Activated naive CD4-positive, alpha-beta T cell treated with anti-CD3 and anti-CD28 coated beads for 36 hours (primary cell): ENCODE measurements at regions of chr22 and their contacts with region 1.

Region 1: DNA sequence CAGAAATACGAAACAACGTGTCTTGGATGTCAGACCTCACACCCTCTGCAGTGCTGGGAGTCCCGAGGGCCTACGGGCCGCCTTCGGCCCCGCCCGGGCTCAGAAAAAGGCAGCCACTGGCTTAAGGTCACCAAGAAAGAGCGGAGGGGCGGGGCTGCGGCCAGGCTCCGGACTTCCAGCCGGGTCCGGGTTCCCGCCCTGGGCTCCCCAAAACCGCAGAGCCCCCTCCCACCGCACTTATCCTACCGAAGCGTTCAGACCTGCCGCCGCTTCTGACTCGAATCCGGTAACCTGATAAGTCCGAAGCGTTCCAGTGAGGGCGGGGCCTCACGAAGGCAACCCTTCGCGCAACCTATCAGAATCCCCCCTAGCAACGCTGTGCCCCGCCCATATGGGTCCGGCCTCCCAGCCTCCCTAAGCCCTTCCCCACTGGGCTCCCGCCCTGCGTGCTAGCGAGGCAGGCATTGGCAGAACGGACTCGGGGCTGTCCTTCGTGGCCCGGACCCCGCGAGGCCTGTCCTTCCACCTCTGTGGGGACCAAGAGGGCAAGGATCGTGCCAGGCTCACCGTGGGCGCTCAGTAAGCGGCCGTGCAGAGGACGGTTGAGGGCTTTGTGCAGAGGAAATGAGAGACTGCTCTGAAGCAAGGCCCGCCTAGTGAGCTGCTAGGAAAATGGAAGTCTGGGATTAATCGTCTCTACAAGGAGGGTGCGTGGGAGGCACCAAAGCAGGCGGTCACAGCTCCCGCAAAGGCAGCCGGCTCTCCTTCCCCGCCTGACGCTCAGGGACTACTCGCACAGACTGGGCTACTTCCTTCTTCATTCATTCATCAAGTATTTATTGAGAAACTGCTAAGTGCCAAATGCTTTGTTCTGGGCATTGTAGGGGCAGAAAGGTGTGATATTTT is at the start of gene NAGA:
- DNase-seq: peak; percentile 96
- H3K4me3 Mint-ChIP-seq: peak within 1 kb of the TSS; percentile 87
- H3K27ac Mint-ChIP-seq: peak within 1 kb of the TSS; percentile 88
- H3K4me1 Mint-ChIP-seq: peaks cover 34% of the 10 kb centered on the region
- H3K27me3 Mint-ChIP-seq: no peaks in the 10 kb centered on the region
- total RNA-seq, gene NAGA: 14.6 to 15.9 TPM

Region 2: GRCh38 chr22:41780746-41781505 is 289.8 kb before region 1 on chr22:
- CTCF ChIA-PET with region 1: no interaction called
- intact Hi-C with region 1: loop called (anchors 5 kb)
- DNase-seq: peak; percentile 98
- H3K4me3 Mint-ChIP-seq: peak overlapping the region; percentile 86
- H3K27ac Mint-ChIP-seq: peak overlapping the region; percentile 95
- H3K4me1 Mint-ChIP-seq: peaks cover 49% of the 10 kb centered on the region
- H3K27me3 Mint-ChIP-seq: no peaks in the 10 kb centered on the region

Region 3: GRCh38 chr22:41798736-41799135 is 272.0 kb before region 1 on chr22:
- CTCF ChIA-PET with region 1: no interaction called
- intact Hi-C with region 1: no loop called
- DNase-seq: no peak
- H3K4me3 Mint-ChIP-seq: peak overlapping the region; percentile 84
- H3K27ac Mint-ChIP-seq: peak overlapping the region; percentile 95
- H3K4me1 Mint-ChIP-seq: peaks cover 24% of the 10 kb centered on the region
- H3K27me3 Mint-ChIP-seq: no peaks in the 10 kb centered on the region

Region 4: DNA sequence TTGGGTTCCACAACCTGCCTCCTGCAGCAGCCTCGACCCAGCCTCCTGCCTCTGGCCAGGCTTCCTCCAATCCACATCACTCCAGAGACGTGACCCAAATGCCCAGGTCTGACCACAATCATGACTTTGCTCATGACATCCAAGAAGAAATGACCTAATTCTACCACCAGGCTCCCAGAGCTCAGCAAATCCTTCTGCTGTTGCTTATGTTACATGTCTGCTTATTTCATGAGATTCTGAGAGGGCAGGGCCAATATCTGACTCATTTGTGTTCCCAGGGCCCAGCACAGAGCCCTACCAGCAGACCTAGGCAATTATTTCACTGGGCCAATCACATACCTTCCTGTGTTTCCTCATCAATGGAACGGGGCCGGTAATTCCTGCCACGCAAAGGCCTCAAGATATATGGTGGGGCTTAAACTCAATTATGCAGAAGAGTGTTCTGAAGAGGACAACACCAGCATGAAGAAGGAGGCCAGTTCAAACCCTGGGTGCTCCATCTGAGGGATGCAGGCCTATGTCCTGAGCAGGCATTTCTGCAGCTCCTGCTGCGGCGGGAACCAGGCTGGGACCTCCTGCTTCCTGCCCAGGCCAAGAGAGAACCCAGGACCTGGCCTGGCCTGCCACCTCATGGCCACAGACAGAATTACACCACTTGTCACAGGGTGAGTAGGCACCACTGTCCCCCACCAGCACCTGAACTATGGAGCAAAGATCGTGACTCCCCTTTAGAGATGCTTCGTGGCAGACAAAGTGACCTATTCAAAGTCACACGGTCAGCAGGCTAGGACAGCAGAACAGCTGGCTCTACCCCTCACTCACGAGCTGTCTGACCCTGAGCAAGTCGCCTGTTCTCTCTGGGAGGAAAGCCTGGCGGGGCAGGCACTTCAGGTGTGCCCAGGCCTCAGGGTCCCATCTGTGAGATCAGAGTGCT is 129.7 kb before region 1 on chr22:
- CTCF ChIA-PET with region 1: no interaction called
- intact Hi-C with region 1: no loop called
- DNase-seq: peak; percentile 91
- H3K4me3 Mint-ChIP-seq: peak overlapping the region; percentile 69
- H3K27ac Mint-ChIP-seq: peak overlapping the region; percentile 100
- H3K4me1 Mint-ChIP-seq: peaks cover 69% of the 10 kb centered on the region
- H3K27me3 Mint-ChIP-seq: no peaks in the 10 kb centered on the region

Region 5: DNA sequence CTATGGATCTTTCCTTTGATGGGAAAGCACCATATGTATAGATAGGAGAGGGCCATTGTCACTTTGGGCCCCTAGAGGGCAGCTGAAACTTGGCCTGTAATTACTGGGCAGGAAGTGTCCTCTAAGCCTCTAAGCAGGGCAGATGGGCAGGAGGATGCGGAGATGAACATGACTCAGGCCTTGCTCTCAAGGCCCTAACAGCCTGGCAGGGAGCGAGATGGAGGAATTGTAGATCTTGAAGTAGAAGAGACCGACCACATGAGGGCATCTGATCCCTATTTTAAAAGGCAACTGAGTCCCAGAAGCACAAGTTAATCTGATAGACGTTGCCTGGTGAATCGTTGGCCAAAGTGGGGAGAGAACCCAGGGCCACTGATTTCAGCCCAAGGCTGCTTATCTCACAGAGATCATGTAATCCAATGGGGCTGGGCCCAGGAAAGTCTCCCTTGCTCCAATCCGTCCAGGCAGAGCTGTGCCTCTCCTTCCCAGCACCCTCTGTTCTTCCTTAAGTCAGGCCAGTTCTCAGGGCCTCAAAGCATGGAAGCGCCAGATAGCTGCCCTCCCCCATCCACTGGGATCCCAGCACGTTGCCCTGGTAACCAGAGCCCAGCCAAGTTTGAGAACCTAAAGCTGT is 104.0 kb before region 1 on chr22:
- CTCF ChIA-PET with region 1: interaction called, 16 read pairs
- intact Hi-C with region 1: loop called (anchors 1 kb)
- DNase-seq: peak; percentile 69
- H3K4me3 Mint-ChIP-seq: no peak overlapping the region
- H3K27ac Mint-ChIP-seq: no peak overlapping the region
- H3K4me1 Mint-ChIP-seq: peaks cover 2% of the 10 kb centered on the region
- H3K27me3 Mint-ChIP-seq: no peaks in the 10 kb centered on the region

Region 6: DNA sequence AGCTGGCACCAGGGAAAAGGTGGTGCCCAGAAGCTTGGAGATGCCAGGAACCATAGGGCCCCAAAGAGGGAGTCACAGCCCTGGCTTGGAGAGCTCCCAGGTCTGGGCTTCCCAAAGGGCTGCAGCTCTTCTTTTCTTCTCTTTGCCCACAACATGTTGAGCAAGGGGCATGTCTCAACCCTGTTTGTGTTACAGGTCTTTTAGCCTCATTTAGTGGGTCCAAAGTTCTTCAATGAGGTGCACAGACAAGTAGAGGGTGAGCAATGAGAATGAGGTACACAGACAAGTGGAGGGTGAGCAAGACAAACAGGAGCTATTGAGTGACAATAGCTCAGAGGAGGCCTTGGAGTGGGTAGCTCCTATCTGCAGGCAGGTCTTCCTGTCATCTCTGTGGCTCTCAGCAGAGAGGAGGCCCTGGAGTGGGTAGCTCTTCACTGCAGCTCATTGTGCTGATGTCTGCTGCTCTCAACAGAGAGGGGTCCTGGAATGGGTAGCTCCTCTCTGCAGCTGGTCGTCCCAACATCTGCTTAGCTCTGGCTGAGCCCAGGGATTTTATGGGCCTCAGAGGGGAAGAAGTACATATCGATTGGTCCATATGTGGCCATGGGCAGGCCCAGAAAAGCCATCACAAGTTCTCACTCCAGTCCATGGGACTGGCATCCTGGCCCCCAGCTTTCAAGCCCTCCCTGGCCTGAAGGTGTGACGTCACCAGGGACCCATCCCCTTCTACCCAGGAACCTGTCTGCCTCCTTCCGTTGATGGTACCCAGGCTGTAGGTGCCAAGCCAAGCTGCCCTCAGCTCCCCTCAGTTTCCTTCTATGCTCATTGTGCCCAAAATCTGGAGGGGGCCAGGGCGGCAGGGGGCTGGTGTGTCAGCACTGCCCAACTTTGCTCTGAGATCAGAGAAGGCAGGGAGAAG is 37.2 kb before region 1 on chr22:
- CTCF ChIA-PET with region 1: no interaction called
- intact Hi-C with region 1: loop called (anchors 1 kb)
- DNase-seq: peak; percentile 42
- H3K4me3 Mint-ChIP-seq: no peak overlapping the region
- H3K27ac Mint-ChIP-seq: no peak overlapping the region
- H3K4me1 Mint-ChIP-seq: peaks cover 20% of the 10 kb centered on the region
- H3K27me3 Mint-ChIP-seq: no peaks in the 10 kb centered on the region

Region 7: DNA sequence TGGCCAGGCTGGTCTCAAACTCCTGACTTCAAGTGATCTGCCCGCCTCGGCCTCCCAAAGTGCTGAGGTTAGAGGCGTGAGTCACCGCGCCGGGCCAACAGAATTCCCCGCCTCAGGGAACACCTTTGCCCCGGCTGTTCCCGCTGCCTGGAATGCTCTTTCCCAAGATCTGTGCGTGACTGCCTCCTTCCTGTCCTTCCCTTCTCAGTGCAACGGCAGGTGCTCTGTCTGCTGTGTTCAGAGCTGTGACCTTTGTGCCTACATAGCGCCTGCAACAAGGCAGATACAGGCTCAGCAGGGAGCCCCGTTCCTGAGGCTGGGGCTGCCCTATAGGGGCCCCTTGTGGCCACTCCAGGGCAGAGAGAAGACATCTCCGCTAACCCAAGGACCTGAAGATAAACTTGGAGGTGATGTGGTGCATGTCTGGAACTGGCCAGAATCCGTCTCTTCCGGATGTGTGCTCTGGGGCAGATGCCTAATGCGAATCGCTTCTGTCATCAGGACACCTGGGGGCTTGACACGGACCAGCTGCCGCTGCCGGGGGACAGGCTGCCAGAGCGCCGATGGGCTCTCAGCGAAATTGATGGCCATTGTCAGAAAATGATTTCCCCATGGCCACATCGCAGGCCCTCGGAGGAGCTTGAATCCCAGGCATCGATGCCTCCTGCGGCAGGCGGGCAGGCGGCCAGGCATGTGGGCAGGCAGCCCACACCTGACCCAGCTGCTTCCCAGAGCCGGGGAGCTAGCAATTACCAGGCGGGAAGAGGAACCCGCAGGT is 243.2 kb after region 1 on chr22:
- CTCF ChIA-PET with region 1: no interaction called
- intact Hi-C with region 1: no loop called
- DNase-seq: peak; percentile 73
- H3K4me3 Mint-ChIP-seq: no peak overlapping the region
- H3K27ac Mint-ChIP-seq: no peak overlapping the region
- H3K4me1 Mint-ChIP-seq: peaks cover 46% of the 10 kb centered on the region
- H3K27me3 Mint-ChIP-seq: no peaks in the 10 kb centered on the region